ENCODE measurements at regions of chr1 and their contacts with region 1.

Region 1: DNA sequence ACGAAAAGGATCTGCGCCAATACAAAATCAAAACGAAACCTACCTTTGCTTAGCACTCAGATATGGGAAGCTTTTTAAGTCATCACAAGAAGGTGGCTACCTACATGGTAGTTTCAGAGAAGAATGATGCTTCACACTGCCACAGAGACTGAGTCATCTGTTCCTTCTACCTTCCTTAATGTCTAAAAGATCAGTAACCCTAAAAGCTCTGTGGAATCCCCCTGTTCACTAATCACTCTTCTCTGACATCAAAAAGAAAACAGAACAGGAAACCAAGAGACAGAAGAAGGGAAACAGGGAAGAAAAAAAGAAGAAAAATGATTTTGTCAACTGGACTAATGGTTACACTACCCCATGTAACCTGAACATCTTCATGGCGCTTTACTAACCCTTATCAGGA is 177.2 kb downstream of the SMYD3 start:
- DNase-seq: peak; percentile 28
- H3K4me3 Mint-ChIP-seq: no peak overlapping the region
- H3K27ac Mint-ChIP-seq: peak overlapping the region; percentile 29
- H3K4me1 Mint-ChIP-seq: peaks cover 48% of the 10 kb centered on the region
- H3K27me3 Mint-ChIP-seq: no peaks in the 10 kb centered on the region

Region 2: GRCh38 chr1:245953876-245954660 is 375.8 kb before region 1 on chr1:
- intact Hi-C with region 1: loop called (anchors 5 kb)
- DNase-seq: no peak
- H3K4me3 Mint-ChIP-seq: peak overlapping the region; percentile 73
- H3K27ac Mint-ChIP-seq: peak overlapping the region; percentile 92
- H3K4me1 Mint-ChIP-seq: peaks cover 28% of the 10 kb centered on the region
- H3K27me3 Mint-ChIP-seq: no peaks in the 10 kb centered on the region

Region 3: GRCh38 chr1:246428542-246429308 is 98.8 kb after region 1 on chr1:
- intact Hi-C with region 1: loop called (anchors 2 kb)
- DNase-seq: peak; percentile 16
- H3K4me3 Mint-ChIP-seq: no peak overlapping the region
- H3K27ac Mint-ChIP-seq: no peak overlapping the region
- H3K4me1 Mint-ChIP-seq: peaks cover 26% of the 10 kb centered on the region
- H3K27me3 Mint-ChIP-seq: no peaks in the 10 kb centered on the region

Region 4: GRCh38 chr1:246566128-246566812 is 236.4 kb after region 1 on chr1 and contains the starts of genes CNST and TFB2M:
- intact Hi-C with region 1: loop called (anchors 5 kb)
- DNase-seq: peak; percentile 93
- H3K4me3 Mint-ChIP-seq: peak within 1 kb of the TSS; percentile 99
- H3K27ac Mint-ChIP-seq: peak within 1 kb of the TSS; percentile 98
- H3K4me1 Mint-ChIP-seq: peaks cover 35% of the 10 kb centered on the region
- H3K27me3 Mint-ChIP-seq: no peaks in the 10 kb centered on the region
- total RNA-seq, gene CNST: 18.8 and 21.6 TPM in 2 replicates
- total RNA-seq, gene TFB2M: 21.0 and 21.7 TPM in 2 replicates

Region 5: GRCh38 chr1:247407180-247407616 is 1077.3 kb after region 1 on chr1:
- intact Hi-C with region 1: loop called (anchors 5 kb)
- DNase-seq: peak; percentile 53
- H3K4me3 Mint-ChIP-seq: peak overlapping the region; percentile 28
- H3K27ac Mint-ChIP-seq: peak overlapping the region; percentile 16
- H3K4me1 Mint-ChIP-seq: peaks cover 36% of the 10 kb centered on the region
- H3K27me3 Mint-ChIP-seq: peaks cover 35% of the 10 kb centered on the region

Measured in activated T-helper 2 cell treated with anti-CD3 and anti-CD28 coated beads, Interferon-gamma antibody, Interleukin-2, Interleukin-4, amounts not matched to agents 10 μg/mL and 5 μg/mL and 100 μg/mL, durations not matched to agents 14 hours and 24 hours and 36 hours (primary cell).